Activated CD8-positive, alpha-beta T cell treated with anti-CD3 and anti-CD28 coated beads for 36 hours (primary cell): ENCODE measurements at regions of chr4 and their contacts with region 1.

Region 1: DNA sequence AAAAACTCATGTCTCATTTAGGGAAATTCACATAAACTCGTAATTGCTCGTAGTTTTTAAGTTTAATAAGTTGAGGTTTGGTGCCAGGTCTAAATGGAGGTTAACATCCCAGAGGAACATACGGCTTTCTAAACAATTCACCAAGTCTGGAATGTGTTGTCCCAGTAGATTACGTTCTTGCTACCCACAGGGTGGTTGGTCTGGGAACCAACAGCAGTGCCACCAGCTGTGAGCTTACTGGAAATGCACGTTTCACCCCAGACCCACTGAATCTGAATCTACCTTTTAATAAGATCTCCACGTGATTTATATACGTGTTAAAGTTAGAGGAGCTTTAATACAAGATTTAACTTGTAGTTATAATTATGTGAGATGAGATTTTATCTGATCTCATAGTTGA is 134.3 kb downstream of the BMPR1B start:
- DNase-seq: no peak
- ATAC-seq: no peak
- H3K4me3 Mint-ChIP-seq: no peak overlapping the region
- H3K27ac Mint-ChIP-seq: no peak overlapping the region
- H3K4me1 Mint-ChIP-seq: no peaks in the 10 kb centered on the region
- H3K27me3 Mint-ChIP-seq: no peaks in the 10 kb centered on the region
- CTCF ChIP-seq: no peak

Region 2: GRCh38 chr4:94877973-94878372 is 14.1 kb before region 1 on chr4:
- CTCF ChIA-PET with region 1: no interaction called
- POLR2A ChIA-PET with region 1: no interaction called
- intact Hi-C with region 1: no loop called
- DNase-seq: no peak
- ATAC-seq: no peak
- H3K4me3 Mint-ChIP-seq: no peak overlapping the region
- H3K27ac Mint-ChIP-seq: no peak overlapping the region
- H3K4me1 Mint-ChIP-seq: no peaks in the 10 kb centered on the region
- H3K27me3 Mint-ChIP-seq: no peaks in the 10 kb centered on the region
- CTCF ChIP-seq: no peak

Region 3: DNA sequence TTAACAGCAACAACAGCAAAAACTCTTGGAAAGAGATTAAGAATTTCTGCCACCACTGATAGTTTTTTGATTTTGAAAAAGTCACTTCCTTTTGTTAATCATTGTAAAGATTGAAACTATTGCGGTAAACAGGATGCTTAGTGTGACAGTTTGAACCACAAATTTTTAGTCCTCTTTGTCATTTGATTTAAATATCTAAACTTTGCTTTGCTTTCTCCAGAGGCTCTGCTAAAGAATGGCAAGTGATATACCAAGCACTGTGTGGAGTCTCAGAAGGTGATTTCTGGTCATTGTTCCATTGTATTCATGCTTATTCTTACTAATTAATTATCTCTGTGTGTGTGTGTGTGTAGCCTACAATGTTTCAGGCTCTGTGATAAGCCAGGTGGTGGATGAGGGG is 21.3 kb after region 1 on chr4:
- CTCF ChIA-PET with region 1: no interaction called
- POLR2A ChIA-PET with region 1: no interaction called
- intact Hi-C with region 1: loop called (anchors 1 kb)
- DNase-seq: no peak
- ATAC-seq: no peak
- H3K4me3 Mint-ChIP-seq: no peak overlapping the region
- H3K27ac Mint-ChIP-seq: no peak overlapping the region
- H3K4me1 Mint-ChIP-seq: peaks cover 3% of the 10 kb centered on the region
- H3K27me3 Mint-ChIP-seq: no peaks in the 10 kb centered on the region
- CTCF ChIP-seq: no peak

Region 4: DNA sequence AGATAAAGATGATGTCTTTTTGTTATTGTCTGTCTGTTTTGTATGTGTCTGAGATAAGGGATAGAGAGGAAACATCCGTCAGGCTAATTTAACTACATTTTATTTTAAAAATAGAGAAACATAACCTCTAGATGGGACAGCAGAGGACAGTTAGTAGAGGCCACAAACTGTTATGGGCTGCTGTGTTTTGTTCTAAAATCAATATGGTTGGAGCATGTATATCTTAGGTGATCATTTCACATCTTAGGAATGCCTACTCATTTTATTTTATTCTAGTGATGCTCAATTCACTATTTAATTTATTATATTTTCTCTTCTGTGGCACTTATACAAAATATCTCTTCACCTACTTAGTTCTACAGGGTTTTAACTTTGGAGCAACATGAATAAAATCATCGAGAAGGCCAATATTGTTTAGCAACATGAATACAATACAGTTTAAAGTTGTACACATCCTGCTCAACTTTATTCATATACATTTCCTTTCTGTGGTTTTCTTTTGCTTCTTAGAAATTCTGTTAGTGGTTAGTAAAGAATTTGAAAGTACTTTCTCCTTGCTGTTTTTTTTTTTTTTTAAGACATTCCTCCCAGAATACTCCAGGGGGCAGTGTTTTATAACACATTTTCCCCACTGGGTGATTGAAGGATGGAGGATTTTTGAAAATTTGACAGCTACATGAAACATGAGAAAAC is 263.9 kb after region 1 on chr4:
- CTCF ChIA-PET with region 1: no interaction called
- POLR2A ChIA-PET with region 1: no interaction called
- intact Hi-C with region 1: no loop called
- DNase-seq: no peak
- ATAC-seq: peak; percentile 74
- H3K4me3 Mint-ChIP-seq: no peak overlapping the region
- H3K27ac Mint-ChIP-seq: peak overlapping the region; percentile 18
- H3K4me1 Mint-ChIP-seq: peaks cover 11% of the 10 kb centered on the region
- H3K27me3 Mint-ChIP-seq: no peaks in the 10 kb centered on the region
- CTCF ChIP-seq: peak; percentile 64